A673 (cell line): ENCODE measurements at regions of chr13 and their contacts with region 1.

Region 1: DNA sequence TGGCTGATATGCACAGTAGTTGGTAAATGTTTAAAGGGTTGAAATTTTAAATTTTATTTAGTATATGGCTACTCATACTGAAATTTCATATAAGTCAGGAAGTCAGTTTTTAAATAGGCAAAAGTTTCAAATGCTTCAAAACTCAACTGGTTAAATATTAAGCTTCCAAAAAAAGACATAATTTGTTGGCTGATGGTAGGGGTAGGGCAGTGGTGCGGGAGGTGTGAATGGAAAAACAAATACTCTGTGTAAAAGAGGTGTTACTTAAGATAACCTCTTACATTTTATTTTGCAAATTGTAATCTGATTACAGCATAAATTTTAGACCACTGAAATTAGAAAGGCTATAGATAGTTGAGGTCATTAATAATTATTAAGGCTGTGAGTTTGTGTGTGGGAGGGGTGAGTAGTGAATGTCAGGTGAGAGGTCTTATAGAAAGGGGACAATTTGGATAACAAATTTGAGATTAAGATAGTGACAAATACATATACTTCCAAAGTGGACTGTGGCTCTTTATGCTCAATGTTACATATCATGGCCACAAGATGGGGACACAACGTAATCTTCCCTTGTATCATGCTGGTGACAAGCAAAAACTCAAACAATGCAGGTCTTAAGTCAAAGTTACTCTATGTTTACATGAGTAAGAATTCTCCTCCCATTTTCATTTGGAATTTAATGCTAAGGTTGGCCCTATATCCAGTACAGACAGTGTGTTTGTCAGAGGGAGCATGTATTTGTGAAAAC is 36.6 kb upstream of the OXGR1 start:
- DNase-seq: peak; percentile 56
- H3K4me3 ChIP-seq: no peak overlapping the region
- H3K27ac ChIP-seq: no peak overlapping the region
- H3K4me1 ChIP-seq: no peaks in the 10 kb centered on the region
- H3K27me3 ChIP-seq: no peaks in the 10 kb centered on the region
- CTCF ChIP-seq: peak; percentile 52

Region 2: GRCh38 chr13:95880331-95880730 is 1150.5 kb before region 1 on chr13:
- CTCF ChIA-PET with region 1: no interaction called
- POLR2A ChIA-PET with region 1: no interaction called
- intact Hi-C with region 1: no loop called
- DNase-seq: no peak
- H3K4me3 ChIP-seq: no peak overlapping the region
- H3K27ac ChIP-seq: no peak overlapping the region
- H3K4me1 ChIP-seq: no peaks in the 10 kb centered on the region
- H3K27me3 ChIP-seq: no peaks in the 10 kb centered on the region
- CTCF ChIP-seq: no peak

Region 3: DNA sequence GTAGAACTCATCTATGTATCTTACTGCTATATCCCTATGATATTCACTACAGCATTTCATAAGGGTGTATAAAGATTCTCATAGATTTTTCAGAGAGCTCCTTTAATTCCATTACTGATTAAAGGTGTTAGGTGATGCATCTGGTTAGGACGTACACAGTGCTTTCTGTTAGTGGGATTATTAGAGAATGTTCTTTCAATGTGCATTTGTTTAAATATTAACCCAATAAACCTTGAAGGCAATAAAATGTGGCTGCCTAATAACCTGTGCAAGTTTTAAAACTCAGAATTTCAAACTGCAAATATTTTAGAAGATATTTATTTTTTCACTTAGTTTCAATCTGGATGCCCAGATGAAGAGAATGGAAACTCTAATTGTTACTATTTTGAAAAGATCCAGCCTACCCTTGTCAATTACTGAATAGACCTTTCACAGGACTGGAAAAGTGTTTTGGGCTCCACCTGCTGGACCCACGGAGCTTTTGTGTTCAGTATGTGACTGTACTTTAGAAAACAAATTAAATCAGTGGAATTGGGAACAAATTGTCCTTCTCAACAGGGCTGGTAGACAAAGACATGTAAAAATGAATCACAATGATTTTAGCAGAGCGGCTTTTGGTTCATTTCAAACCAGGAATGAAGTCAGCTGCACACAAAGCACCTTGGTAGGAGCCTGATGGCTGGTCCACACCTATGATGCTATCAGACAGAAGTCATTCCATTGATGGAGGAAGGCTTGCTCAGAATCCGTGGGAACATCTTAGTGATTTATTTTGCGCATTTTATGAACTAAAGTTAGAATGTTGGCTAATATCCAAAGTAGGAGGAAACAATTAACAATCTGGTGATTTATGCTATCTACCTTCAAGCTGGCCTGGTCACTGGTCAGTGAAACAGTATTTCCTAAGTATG is 313.6 kb after region 1 on chr13:
- CTCF ChIA-PET with region 1: no interaction called
- POLR2A ChIA-PET with region 1: no interaction called
- intact Hi-C with region 1: loop called (anchors 5 kb)
- DNase-seq: peak; percentile 73
- H3K4me3 ChIP-seq: no peak overlapping the region
- H3K27ac ChIP-seq: no peak overlapping the region
- H3K4me1 ChIP-seq: no peaks in the 10 kb centered on the region
- H3K27me3 ChIP-seq: no peaks in the 10 kb centered on the region
- CTCF ChIP-seq: peak; percentile 71

Region 4: GRCh38 chr13:97359181-97360057 is 328.5 kb after region 1 on chr13:
- CTCF ChIA-PET with region 1: no interaction called
- POLR2A ChIA-PET with region 1: no interaction called
- intact Hi-C with region 1: loop called (anchors 1 kb)
- DNase-seq: peak; percentile 83
- H3K4me3 ChIP-seq: no peak overlapping the region
- H3K27ac ChIP-seq: no peak overlapping the region
- H3K4me1 ChIP-seq: no peaks in the 10 kb centered on the region
- H3K27me3 ChIP-seq: no peaks in the 10 kb centered on the region
- CTCF ChIP-seq: peak; percentile 91